ENCODE measurements at regions of chr1 and their contacts with region 1.

Region 1: DNA sequence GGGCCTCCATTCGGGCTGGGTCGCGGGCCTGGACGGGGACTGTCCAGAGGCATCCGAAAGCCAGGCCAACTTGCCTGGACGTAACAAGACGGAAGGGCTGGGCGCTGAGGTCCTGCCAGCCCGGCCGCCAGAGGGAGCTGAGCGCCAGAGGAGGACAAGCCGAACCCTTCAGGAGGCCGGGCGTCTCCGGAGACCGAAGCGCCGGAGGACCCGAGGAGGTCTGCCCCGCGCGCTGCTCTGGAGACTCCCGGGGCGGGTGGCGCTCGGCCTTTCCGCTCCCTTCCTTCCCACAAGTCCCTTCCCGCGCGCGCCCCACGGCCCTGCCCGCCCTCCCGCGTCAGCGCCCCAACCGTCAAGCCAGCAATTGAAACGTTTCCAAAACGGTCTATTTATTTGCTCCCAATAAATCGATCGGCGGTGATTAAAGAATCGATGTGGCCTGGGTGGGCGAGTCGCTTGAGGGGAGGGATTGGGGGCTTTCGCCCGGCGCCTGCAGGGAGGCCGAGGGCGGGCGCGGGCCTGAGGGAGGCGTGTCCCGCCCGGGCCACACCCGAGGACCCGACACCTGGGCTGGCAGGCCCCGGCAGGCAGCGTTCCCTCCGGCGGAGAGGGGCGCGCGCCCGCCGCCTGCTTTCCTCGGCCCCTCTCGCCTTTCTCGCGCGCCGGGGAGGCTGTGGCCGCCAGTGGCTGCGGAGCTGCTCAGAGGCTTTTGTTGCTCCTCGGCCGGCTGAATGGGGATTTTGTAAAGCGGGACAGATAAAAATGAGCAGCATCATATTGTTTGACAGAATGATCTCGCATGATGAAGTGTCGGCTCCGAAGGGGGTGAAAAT is 5.2 kb upstream of the FOXD3 start:
- DNase-seq: peak in 3 of 5 donors; percentile 25 to 40 (median 34)
- H3K4me3 ChIP-seq: peak overlapping the region in 1 of 2 donors; percentile 32
- H3K4me3 Mint-ChIP-seq: peak overlapping the region; percentile 42 to 82 (median 66)
- H3K27ac ChIP-seq: no peak overlapping the region
- H3K27ac Mint-ChIP-seq: peak overlapping the region in 2 of 7 donors; percentile 5 to 91
- H3K4me1 ChIP-seq: peaks cover 23% of the 10 kb centered on the region
- H3K4me1 Mint-ChIP-seq: peaks cover 12 to 44% (median 26%) of the 10 kb centered on the region in 4 donors
- H3K27me3 ChIP-seq: peaks cover 62% of the 10 kb centered on the region
- H3K27me3 Mint-ChIP-seq: peaks cover 62 to 64% of the 10 kb centered on the region in 2 donors

Region 2: DNA sequence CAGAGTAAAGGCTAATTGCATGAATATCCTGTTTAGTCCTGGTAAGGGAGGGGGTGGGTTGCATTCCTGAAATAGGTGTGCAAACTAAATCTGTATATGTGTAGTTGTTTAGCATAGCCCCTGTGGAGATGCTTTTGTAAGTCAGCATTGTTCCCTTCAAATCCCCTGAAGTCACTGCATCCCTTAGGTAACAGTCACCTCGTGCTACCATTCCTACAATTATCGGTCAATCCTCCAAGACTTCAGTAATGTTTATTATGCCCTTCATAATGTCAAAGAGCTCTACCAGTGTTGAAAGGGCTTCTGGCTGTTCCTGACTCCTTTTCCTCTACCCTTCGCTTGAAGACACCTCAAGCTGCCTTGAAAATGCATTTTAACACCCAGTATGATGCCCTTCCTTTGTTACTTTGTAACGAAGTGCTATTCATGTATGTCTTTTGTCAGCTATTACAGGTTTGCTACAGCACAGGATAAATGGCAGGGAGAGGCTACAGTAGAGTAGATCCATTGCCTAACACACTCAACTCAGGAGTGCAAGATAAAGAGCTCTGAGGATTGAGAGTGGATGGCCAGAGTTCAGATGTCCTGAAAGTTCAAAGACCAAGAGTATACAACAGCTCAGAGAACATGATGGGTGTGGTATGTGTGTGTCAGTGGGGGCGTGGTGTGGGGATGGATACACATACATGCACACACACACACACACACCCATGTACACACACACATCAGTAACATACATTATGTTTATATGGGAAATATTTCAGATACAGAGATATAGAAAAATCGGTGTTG is 22.2 kb before region 1 on chr1:
- CTCF ChIA-PET with region 1: no interaction called
- POLR2A ChIA-PET with region 1: no interaction called
- intact Hi-C with region 1: no loop called
- DNase-seq: no peak
- H3K4me3 ChIP-seq: no peak overlapping the region
- H3K4me3 Mint-ChIP-seq: no peak overlapping the region
- H3K27ac ChIP-seq: no peak overlapping the region
- H3K27ac Mint-ChIP-seq: no peak overlapping the region
- H3K4me1 ChIP-seq: no peaks in the 10 kb centered on the region
- H3K4me1 Mint-ChIP-seq: no peaks in the 10 kb centered on the region
- H3K27me3 ChIP-seq: no peaks in the 10 kb centered on the region
- H3K27me3 Mint-ChIP-seq: peaks cover 9 to 17% of the 10 kb centered on the region in 2 donors

Region 3: DNA sequence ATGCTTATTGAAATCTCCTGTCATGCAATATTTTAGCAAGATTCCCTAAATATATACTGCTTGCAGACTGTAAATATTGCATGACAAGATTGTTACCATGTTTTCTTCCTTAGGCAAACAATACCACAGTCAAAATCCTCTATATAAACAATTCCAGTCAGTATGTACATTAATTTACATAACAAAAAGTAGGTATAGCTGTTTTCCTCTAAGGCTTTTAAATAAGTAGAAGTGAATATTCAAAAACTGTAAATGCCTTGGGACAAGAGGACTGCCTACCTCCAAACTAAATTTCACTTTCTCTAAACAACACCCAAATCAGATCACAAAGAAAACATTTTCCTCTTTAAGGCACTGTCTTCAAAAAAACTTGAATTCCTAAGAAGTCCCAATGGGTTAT is 12.2 kb before region 1 on chr1:
- CTCF ChIA-PET with region 1: no interaction called
- POLR2A ChIA-PET with region 1: no interaction called
- intact Hi-C with region 1: no loop called
- DNase-seq: no peak
- H3K4me3 ChIP-seq: no peak overlapping the region
- H3K4me3 Mint-ChIP-seq: no peak overlapping the region
- H3K27ac ChIP-seq: no peak overlapping the region
- H3K27ac Mint-ChIP-seq: no peak overlapping the region
- H3K4me1 ChIP-seq: no peaks in the 10 kb centered on the region
- H3K4me1 Mint-ChIP-seq: no peaks in the 10 kb centered on the region
- H3K27me3 ChIP-seq: peaks cover 5% of the 10 kb centered on the region
- H3K27me3 Mint-ChIP-seq: peaks cover 30 to 41% of the 10 kb centered on the region in 2 donors

Region 4: DNA sequence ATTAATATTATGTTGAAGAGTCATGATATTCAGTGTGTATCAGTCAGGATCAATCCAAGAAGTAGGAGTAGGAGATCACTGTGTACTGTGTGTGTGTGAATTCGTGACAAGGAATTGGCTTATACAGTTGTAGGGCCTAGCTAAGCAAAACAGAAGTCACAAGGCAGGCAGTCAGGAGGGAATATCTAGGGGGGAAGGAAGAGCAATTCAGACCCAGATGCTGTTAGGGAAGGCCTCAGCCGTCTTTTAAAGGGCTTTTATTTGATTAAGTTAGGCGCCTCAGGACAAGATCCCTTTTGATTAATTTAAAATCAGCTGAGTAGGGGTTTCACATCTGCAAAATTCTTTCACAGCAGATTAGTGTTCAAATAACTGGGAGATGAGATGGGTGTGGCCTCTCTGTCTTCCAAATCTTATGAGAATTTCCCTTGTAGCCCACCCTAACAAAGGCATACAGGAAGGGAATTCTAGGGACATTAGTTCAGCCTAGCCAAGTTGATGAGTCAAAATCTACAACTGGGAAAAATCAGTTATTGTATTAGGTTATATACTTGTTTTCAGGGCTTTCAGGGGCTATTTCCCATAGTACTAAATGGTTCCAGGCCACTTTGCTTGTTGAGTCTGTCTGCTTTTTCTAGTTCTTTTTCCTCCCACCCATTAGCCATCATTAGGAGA is 97.6 kb after region 1 on chr1:
- CTCF ChIA-PET with region 1: no interaction called
- POLR2A ChIA-PET with region 1: no interaction called
- intact Hi-C with region 1: no loop called
- DNase-seq: no peak
- H3K4me3 ChIP-seq: no peak overlapping the region
- H3K4me3 Mint-ChIP-seq: no peak overlapping the region
- H3K27ac ChIP-seq: no peak overlapping the region
- H3K27ac Mint-ChIP-seq: peak overlapping the region in 1 of 7 donors; percentile 8
- H3K4me1 ChIP-seq: no peaks in the 10 kb centered on the region
- H3K4me1 Mint-ChIP-seq: no peaks in the 10 kb centered on the region
- H3K27me3 ChIP-seq: no peaks in the 10 kb centered on the region
- H3K27me3 Mint-ChIP-seq: no peaks in the 10 kb centered on the region

Region 5: GRCh38 chr1:63442141-63442475 is 124.9 kb after region 1 on chr1:
- CTCF ChIA-PET with region 1: no interaction called
- POLR2A ChIA-PET with region 1: no interaction called
- intact Hi-C with region 1: loop called (anchors 1 kb)
- DNase-seq: no peak
- H3K4me3 ChIP-seq: no peak overlapping the region
- H3K4me3 Mint-ChIP-seq: no peak overlapping the region
- H3K27ac ChIP-seq: no peak overlapping the region
- H3K27ac Mint-ChIP-seq: no peak overlapping the region
- H3K4me1 ChIP-seq: no peaks in the 10 kb centered on the region
- H3K4me1 Mint-ChIP-seq: no peaks in the 10 kb centered on the region
- H3K27me3 ChIP-seq: no peaks in the 10 kb centered on the region
- H3K27me3 Mint-ChIP-seq: no peaks in the 10 kb centered on the region

Region 6: DNA sequence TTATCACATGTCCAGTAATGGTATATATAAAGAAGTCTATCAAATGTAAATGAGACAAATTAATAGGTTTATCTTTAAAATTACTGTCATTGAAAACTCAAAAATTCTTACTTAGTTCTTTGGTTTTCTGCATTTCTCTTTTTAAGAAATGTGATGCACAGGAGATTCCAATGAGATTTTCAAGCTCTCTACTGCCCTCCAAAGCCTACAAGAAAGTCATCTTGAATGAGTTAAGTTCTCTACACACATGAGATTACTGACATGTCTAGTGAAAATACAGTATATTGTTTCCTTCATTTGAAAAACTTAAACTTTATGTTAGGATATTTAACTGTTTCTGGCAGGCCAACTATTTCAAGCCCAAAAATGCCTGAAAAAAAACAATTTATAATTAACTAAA is 137.1 kb after region 1 on chr1:
- CTCF ChIA-PET with region 1: no interaction called
- POLR2A ChIA-PET with region 1: no interaction called
- intact Hi-C with region 1: no loop called
- DNase-seq: no peak
- H3K4me3 ChIP-seq: no peak overlapping the region
- H3K4me3 Mint-ChIP-seq: no peak overlapping the region
- H3K27ac ChIP-seq: no peak overlapping the region
- H3K27ac Mint-ChIP-seq: no peak overlapping the region
- H3K4me1 ChIP-seq: no peaks in the 10 kb centered on the region
- H3K4me1 Mint-ChIP-seq: no peaks in the 10 kb centered on the region
- H3K27me3 ChIP-seq: no peaks in the 10 kb centered on the region
- H3K27me3 Mint-ChIP-seq: no peaks in the 10 kb centered on the region